Transverse colon (tissue), 4 donors: ENCODE measurements at regions of chr18 and their contacts with region 1.

Region 1: DNA sequence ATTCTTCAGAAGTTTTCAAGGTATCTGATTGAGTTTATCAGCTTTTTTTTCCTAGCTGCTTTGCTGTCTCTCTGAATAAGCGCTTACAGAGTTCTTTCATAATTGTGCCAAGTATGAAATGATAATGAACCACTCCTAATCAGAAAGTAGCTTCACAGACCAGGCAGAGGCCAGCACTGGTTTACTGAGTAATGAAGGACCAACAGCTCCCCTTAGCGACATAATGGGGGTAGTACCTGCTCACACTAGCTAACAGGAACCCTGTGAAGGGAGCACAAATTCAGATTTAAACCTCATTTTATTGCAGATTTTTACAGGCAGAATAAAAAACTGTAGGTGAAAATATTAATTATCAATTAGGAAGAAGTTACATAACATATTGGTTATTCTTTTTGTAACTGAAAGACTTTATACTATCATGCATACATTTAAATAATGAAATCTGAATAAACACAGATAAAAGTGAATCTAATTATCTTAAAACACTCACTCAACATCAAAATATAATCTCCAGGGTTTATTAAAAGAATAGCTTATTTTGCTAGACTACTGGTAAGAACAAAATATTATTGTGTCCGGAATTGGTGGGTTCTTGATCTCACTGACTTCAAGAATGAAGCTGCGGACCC is 53.7 kb upstream of the LRRC30 start:
- DNase-seq: no peak
- H3K4me3 ChIP-seq: no peak overlapping the region
- H3K27ac ChIP-seq: no peak overlapping the region
- H3K4me1 ChIP-seq: no peaks in the 10 kb centered on the region
- H3K27me3 ChIP-seq: no peaks in the 10 kb centered on the region
- CTCF ChIP-seq: peak; percentile 25 to 57 (median 48)
- EP300 ChIP-seq: no peak
- POLR2A ChIP-seq: no peak

Region 2: DNA sequence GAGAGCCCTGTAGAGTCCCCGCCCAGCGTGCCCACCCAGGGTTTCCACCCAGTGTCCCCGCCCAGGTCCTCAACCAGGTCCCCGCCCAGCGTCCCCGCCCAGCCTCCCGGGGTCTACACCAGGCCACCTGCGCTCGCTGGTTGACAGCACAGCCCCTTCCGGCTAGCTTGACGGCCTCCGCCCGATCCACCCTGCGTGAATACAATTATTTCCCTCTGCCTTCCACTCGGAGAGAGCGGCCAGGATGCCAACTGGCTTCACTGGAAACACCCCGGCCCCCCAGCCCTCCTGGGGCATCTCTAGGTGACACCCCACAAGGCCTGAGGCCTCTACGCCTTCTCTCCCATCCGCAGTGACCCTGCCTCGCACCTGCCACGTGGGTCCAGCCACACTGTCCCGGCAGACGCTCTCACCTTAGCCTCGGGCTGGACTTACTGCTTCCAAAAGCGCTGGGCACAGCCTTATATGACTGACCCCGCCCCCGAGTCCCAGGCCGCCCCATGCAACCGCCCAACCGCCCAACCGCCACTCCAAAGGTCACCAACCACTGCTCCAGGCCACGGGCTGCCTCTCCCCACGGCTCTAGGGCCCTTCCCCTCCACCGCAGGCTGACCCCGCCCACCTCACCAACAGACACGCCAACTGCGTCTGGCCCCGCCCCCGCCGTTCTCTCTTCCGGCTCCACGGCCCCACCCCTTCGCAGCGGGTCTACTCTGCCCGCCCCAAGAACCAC is 247.7 kb before region 1 on chr18:
- in situ Hi-C with region 1: loop called in 2 of 4 experiments (anchors 25 kb)
- intact Hi-C with region 1: no loop called
- DNase-seq: peak; percentile 47
- H3K4me3 ChIP-seq: no peak overlapping the region
- H3K27ac ChIP-seq: peak overlapping the region in 1 of 4 donors; percentile 42
- H3K4me1 ChIP-seq: no peaks in the 10 kb centered on the region
- H3K27me3 ChIP-seq: no peaks in the 10 kb centered on the region
- CTCF ChIP-seq: no peak
- EP300 ChIP-seq: no peak
- POLR2A ChIP-seq: peak; percentile 65

Region 3: GRCh38 chr18:7032537-7032936 is 144.7 kb before region 1 on chr18:
- in situ Hi-C with region 1: no loop called
- intact Hi-C with region 1: loop called (anchors 2 kb)
- DNase-seq: no peak
- H3K4me3 ChIP-seq: no peak overlapping the region
- H3K27ac ChIP-seq: no peak overlapping the region
- H3K4me1 ChIP-seq: no peaks in the 10 kb centered on the region
- H3K27me3 ChIP-seq: no peaks in the 10 kb centered on the region
- CTCF ChIP-seq: no peak
- EP300 ChIP-seq: no peak
- POLR2A ChIP-seq: no peak

Region 4: DNA sequence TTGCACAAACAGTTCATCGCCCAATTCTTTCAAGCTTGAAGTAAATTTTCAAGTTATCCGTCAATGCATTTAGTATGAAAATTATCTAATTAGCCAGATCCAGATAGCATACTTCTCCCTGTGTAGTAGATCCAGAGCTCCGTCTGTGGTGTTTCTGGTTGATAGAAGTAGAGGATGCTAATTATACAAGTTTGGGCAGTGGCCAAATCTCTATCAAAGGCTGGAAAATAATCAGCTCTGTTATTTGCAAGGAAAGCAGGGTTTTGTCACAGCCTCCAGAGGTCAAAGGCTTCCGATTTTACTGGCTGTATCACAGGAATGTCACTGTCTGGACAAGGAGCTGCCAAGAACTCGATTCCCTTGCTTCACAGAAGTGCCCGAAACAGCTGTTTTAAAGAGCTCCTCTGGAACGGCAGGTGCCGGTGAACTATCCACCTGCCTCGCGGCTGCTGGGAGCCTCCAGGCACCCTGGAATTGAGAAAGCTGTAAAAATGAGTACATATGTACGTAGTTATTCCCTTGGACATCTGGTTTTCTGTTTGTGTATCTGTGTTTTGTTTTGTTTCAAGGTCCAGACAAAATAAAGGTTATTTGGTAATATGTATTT is 82.3 kb after region 1 on chr18:
- in situ Hi-C with region 1: no loop called
- intact Hi-C with region 1: no loop called
- DNase-seq: no peak
- H3K4me3 ChIP-seq: no peak overlapping the region
- H3K27ac ChIP-seq: no peak overlapping the region
- H3K4me1 ChIP-seq: no peaks in the 10 kb centered on the region
- H3K27me3 ChIP-seq: no peaks in the 10 kb centered on the region
- CTCF ChIP-seq: no peak
- EP300 ChIP-seq: no peak
- POLR2A ChIP-seq: no peak